H1 (cell line): ENCODE measurements at regions of chr12 and their contacts with region 1.

Region 1: DNA sequence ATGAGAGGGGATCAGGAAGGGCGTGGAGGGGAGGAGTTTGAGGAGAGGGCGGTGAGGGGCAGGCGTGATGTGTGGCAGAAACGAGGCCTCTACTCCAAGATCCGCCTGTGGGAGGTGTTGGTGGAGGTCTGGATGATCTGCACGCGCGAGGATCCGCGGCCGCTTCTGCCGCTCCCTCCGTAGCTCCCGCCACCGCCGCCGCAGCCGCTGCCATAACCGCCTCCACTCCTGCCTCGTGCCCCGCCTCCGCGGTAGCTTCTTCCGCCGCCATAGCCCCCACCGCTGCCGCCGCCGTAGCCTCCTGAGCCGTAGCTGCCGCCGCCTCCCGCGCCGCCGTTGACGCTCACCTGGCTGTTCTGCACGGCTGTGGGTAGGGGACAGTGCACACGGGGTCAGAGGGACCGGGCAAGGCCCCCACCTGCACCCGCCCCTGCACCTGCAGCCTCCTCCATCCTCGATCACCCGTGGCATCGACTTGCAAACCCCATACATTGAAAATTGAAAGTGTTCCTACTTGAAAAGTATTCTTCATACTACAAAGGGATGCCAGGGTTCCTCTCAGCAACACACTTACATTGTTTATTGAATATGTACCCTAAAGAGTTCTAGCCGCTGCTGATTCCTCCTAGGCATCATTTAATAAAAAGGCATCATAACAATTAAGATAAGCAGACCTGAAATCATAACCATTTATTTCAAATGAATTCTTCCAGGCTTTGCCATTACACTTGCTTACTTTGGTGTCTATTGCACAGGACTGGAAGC is 11.1 kb upstream of the KRT1 start:
- DNase-seq: peak in 1 of 2 experiments; percentile 68
- H3K4me3 ChIP-seq: peak overlapping the region; percentile 31 to 58 (median 36)
- H3K27ac ChIP-seq: no peak overlapping the region
- H3K4me1 ChIP-seq: peaks cover 0 to 9% (median 3%) of the 10 kb centered on the region in 4 experiments; a peak in 2 of 7 replicates
- H3K27me3 ChIP-seq: peaks cover 0 to 30% (median 16%) of the 10 kb centered on the region in 4 experiments; a peak in 6 of 7 replicates
- CTCF ChIP-seq: no peak
- EP300 ChIP-seq: no peak
- POLR2A ChIP-seq: no peak
- RAD21 ChIP-seq: no peak

Region 2: DNA sequence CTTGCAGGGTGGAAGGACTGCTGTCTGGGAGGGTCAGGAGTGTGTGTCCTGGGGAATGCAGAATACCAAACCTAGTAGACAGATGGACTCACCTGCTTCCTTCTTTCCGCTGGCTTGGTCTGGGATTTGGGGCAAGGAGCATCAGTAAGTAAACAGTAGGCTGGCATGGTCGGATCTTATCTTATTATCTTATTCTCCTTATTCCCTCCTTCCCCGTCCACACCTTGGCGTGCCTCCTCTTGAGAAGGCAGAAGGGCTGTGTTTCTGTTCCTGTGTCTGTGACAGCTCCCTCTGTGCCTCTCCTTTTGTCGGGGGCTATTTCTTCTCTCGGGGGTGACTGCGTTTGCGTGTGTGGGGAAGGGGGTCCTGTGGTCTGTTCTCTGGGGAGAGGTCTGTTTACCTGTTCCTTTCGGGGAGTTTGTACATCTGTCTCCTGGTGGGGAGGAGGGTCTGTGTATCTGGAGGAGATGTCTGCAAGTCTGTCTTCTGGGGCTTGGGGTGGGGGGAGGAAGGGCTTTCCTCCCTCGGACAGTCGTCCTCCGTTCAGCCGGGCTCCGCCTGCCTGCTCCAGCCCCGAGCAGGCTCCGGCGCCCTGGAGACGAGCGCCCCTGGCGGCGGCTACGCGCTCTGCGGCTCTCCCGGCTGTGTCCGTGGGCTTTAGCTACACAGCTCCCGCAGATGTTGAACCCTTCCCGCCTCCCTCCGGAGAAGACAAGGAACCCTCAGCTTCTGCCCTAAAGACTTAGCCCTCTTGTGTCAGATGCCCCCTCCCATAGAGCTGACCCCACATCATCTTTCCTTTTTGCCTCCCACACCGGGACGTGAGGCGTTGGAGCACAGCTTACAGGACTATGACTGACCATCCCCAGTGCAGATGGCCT is 412.5 kb before region 1 on chr12:
- CTCF ChIA-PET with region 1: no interaction called
- POLR2A ChIA-PET with region 1: no interaction called
- DNase-seq: peak; percentile 33 to 96
- H3K4me3 ChIP-seq: peak overlapping the region; percentile 18 to 57 (median 32); a peak in 5 of 8 replicates
- H3K27ac ChIP-seq: no peak overlapping the region
- H3K4me1 ChIP-seq: peaks cover 0 to 4% (median 0%) of the 10 kb centered on the region in 4 experiments; a peak in 1 of 7 replicates
- H3K27me3 ChIP-seq: peaks cover 0 to 12% (median 5%) of the 10 kb centered on the region in 4 experiments; a peak in 4 of 7 replicates
- CTCF ChIP-seq: peak; percentile 93 to 96 (median 95)
- EP300 ChIP-seq: no peak
- POLR2A ChIP-seq: no peak
- RAD21 ChIP-seq: peak; percentile 70 to 80

Region 3: DNA sequence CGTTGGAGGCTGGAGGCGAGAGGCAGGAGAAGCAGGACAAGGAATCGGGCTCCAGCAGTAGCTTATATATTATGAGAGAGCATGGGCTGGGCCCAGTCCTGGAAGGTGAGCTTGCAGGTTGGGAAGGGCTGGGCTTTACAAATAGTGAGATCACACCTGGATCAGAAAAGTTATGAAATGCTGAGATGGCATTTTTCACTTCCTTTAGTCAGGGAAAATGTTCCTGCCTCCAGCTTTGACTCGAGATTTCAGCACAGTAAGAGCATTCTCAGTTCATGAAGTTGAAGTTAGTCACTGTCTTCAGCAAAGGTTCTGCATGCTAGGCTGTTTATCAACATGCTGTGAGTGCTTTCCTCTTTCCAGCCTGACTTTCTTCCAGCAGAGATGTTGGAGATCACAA is 217.5 kb before region 1 on chr12 and contains the start of gene KRT6C:
- CTCF ChIA-PET with region 1: no interaction called
- POLR2A ChIA-PET with region 1: no interaction called
- DNase-seq: no peak
- H3K4me3 ChIP-seq: no peak within 1 kb of the TSS
- H3K27ac ChIP-seq: no peak within 1 kb of the TSS
- H3K4me1 ChIP-seq: no peaks in the 10 kb centered on the region
- H3K27me3 ChIP-seq: no peaks in the 10 kb centered on the region
- CTCF ChIP-seq: no peak
- EP300 ChIP-seq: no peak
- POLR2A ChIP-seq: no peak
- RAD21 ChIP-seq: no peak
- total RNA-seq, gene KRT6C: not detected in 2 replicates

Region 4: DNA sequence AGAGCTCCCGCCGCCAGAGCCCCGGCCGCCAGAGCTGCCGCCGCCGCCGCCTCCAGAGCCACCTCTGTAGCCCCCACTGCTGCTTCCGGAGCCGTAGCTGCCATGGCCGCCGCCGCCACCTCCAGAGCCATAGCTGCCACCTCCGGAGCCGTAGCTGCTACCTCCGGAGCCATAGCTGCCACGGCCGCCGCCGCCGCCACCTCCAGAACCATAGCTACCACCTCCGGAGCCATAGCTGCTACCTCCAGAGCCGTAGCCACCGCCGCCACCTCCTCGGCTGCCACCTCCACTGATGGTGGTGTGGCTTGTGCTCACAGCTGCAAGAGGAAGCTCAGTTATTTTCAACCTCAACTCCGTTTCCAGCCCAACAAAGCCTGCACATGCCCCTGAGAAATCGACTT is 16.0 kb before region 1 on chr12:
- CTCF ChIA-PET with region 1: interaction called, 11 read pairs
- POLR2A ChIA-PET with region 1: interaction called, 4 read pairs
- DNase-seq: no peak
- H3K4me3 ChIP-seq: no peak overlapping the region
- H3K27ac ChIP-seq: no peak overlapping the region
- H3K4me1 ChIP-seq: no peaks in the 10 kb centered on the region
- H3K27me3 ChIP-seq: no peaks in the 10 kb centered on the region; a peak in 1 of 7 replicates
- CTCF ChIP-seq: no peak
- EP300 ChIP-seq: no peak
- POLR2A ChIP-seq: no peak
- RAD21 ChIP-seq: no peak

Region 5: GRCh38 chr12:52708010-52708409 is 16.8 kb after region 1 on chr12:
- CTCF ChIA-PET with region 1: interaction called, 23 read pairs
- POLR2A ChIA-PET with region 1: no interaction called
- DNase-seq: no peak
- H3K4me3 ChIP-seq: no peak overlapping the region
- H3K27ac ChIP-seq: no peak overlapping the region
- H3K4me1 ChIP-seq: no peaks in the 10 kb centered on the region
- H3K27me3 ChIP-seq: peaks cover 0 to 3% (median 1%) of the 10 kb centered on the region in 4 experiments; a peak in 4 of 7 replicates
- CTCF ChIP-seq: no peak
- EP300 ChIP-seq: no peak
- POLR2A ChIP-seq: no peak
- RAD21 ChIP-seq: no peak

Region 6: GRCh38 chr12:52715416-52715815 is 24.2 kb after region 1 on chr12:
- CTCF ChIA-PET with region 1: interaction called, 12 read pairs
- POLR2A ChIA-PET with region 1: no interaction called
- DNase-seq: peak in 1 of 2 experiments; percentile 78
- H3K4me3 ChIP-seq: no peak overlapping the region
- H3K27ac ChIP-seq: no peak overlapping the region
- H3K4me1 ChIP-seq: peaks cover 0 to 7% (median 0%) of the 10 kb centered on the region in 4 experiments; a peak in 3 of 7 replicates
- H3K27me3 ChIP-seq: peaks cover 8 to 32% (median 26%) of the 10 kb centered on the region in 4 experiments
- CTCF ChIP-seq: peak; percentile 66 to 74 (median 71)
- EP300 ChIP-seq: no peak
- POLR2A ChIP-seq: no peak
- RAD21 ChIP-seq: peak; percentile 44 to 67

Region 7: GRCh38 chr12:52870351-52871290 is 179.4 kb after region 1 on chr12:
- CTCF ChIA-PET with region 1: interaction called, 39 read pairs
- POLR2A ChIA-PET with region 1: no interaction called
- DNase-seq: peak in 1 of 2 experiments; percentile 98
- H3K4me3 ChIP-seq: no peak overlapping the region
- H3K27ac ChIP-seq: no peak overlapping the region
- H3K4me1 ChIP-seq: no peaks in the 10 kb centered on the region; a peak in 4 of 7 replicates
- H3K27me3 ChIP-seq: peaks cover 0 to 22% (median 12%) of the 10 kb centered on the region in 4 experiments; a peak in 5 of 7 replicates
- CTCF ChIP-seq: peak; percentile 86 to 98 (median 90)
- EP300 ChIP-seq: no peak
- POLR2A ChIP-seq: no peak
- RAD21 ChIP-seq: peak; percentile 96 to 98